ENCODE measurements at regions of chr12 and their contacts with region 1.

Region 1: DNA sequence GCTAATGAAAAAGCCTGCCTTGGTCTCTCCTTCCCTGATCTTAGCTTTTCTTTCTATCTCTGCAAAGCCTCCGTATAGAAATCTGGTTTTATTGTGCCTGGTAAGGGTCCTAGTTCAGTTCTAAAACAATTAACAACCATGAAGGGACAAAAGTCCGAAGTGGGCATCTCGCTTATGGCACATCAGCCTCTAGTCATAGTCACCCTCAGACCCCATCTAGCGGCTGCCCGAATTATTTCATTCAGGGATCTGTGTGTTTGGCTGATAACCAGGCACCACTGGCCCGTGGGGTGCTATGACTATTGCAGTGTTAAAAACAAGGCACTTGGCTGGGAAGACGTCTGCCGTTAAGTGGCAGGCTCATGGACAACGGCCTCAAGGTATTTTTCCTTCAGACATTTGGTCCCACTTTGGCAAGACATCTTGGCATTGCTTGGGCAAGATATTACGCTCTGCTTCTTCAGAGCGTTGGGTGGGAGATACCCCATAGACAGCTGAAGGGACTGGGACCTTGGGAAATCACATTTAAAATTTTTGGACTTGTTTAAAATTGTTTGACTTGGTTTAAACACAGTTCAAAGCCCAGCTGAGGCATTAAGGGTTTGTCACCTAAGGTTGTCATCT is 87.1 kb downstream of the SINHCAF start:
- DNase-seq: peak in 1 of 2 donors; percentile 34
- ATAC-seq: peak in 1 of 2 donors; percentile 69
- H3K4me3 ChIP-seq: no peak overlapping the region
- H3K27ac ChIP-seq: no peak overlapping the region
- H3K4me1 ChIP-seq: no peaks in the 10 kb centered on the region
- H3K27me3 ChIP-seq: no peaks in the 10 kb centered on the region
- CTCF ChIP-seq: peak; percentile 27 to 57 (median 51)
- POLR2A ChIP-seq: no peak

Region 2: GRCh38 chr12:30862486-30862885 is 376.4 kb before region 1 on chr12:
- in situ Hi-C with region 1: loop called in 1 of 4 experiments (anchors 25 kb)
- intact Hi-C with region 1: loop called (anchors 10 kb)
- DNase-seq: no peak
- ATAC-seq: no peak
- H3K4me3 ChIP-seq: no peak overlapping the region
- H3K27ac ChIP-seq: no peak overlapping the region
- H3K4me1 ChIP-seq: no peaks in the 10 kb centered on the region
- H3K27me3 ChIP-seq: no peaks in the 10 kb centered on the region
- CTCF ChIP-seq: no peak
- POLR2A ChIP-seq: no peak

Region 3: DNA sequence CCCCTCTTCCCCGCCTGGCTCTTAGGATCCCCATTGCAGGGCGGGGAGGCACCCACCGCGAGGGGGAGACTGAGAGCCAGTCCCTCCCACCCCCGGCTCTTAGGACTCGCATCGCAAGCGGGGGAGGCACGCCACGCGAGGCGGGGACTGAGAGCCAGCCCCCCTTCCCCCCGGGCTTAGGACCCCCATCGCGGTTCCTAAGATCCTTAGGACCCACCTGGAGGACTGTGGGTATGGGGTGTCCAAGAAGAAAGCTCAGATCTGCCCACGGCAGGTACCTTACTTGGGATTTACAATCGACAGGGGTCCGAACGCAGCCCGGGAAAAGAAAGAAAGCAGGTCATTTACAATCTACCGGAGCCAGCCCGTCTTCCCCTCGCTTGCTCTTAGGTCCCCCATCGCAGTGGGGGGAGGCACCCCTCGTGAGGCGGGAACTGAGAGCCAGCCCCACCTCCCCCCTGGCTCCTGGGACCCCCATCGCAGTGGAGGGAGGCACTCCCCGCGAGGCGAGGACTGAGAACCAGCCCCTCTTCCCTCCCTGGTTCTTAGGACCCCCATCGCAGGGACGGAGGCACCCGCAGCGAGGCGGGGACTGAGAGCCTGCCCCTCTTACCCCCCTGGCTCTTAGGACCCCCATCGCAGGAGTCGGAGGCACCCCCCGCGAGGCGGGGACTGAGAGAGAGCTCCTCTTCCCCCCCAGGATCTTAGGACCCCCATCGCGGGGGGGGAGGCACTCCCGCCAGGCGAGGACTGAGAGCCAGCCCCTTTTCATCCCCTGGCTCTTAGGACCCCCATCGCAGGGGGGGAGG is 121.5 kb before region 1 on chr12:
- in situ Hi-C with region 1: loop called in 1 of 4 experiments (anchors 25 kb)
- intact Hi-C with region 1: no loop called
- DNase-seq: no peak
- ATAC-seq: peak; percentile 60 to 84
- H3K4me3 ChIP-seq: peak overlapping the region; percentile 50 to 79 (median 52)
- H3K27ac ChIP-seq: no peak overlapping the region
- H3K4me1 ChIP-seq: peaks cover 0 to 28% of the 10 kb centered on the region in 2 donors
- H3K27me3 ChIP-seq: peaks cover 20 to 24% (median 20%) of the 10 kb centered on the region in 3 donors
- CTCF ChIP-seq: peak in 4 of 5 experiments; percentile 12 to 65 (median 44)
- POLR2A ChIP-seq: no peak